ENCODE measurements at regions of chr1 and their contacts with region 1.

Region 1: GRCh38 chr1:11979851-11980675 is at the start of gene MFN2:
- DNase-seq: peak; percentile 97
- H3K4me3 ChIP-seq: peak within 1 kb of the TSS; percentile 71
- H3K4me3 Mint-ChIP-seq: peak within 1 kb of the TSS; percentile 99
- H3K27ac Mint-ChIP-seq: peak within 1 kb of the TSS; percentile 99
- H3K4me1 ChIP-seq: peaks cover 35% of the 10 kb centered on the region
- H3K4me1 Mint-ChIP-seq: peaks cover 19% of the 10 kb centered on the region
- H3K27me3 ChIP-seq: no peaks in the 10 kb centered on the region
- H3K27me3 Mint-ChIP-seq: no peaks in the 10 kb centered on the region
- CTCF ChIP-seq: no peak
- total RNA-seq, gene MFN2: 73.9 and 74.1 TPM in 2 replicates

Region 2: GRCh38 chr1:11874258-11874562 is 105.9 kb before region 1 on chr1:
- CTCF ChIA-PET with region 1: no interaction called
- POLR2A ChIA-PET with region 1: interaction called, 10 read pairs
- intact Hi-C with region 1: no loop called
- DNase-seq: no peak
- H3K4me3 ChIP-seq: no peak overlapping the region
- H3K4me3 Mint-ChIP-seq: no peak overlapping the region
- H3K27ac Mint-ChIP-seq: no peak overlapping the region
- H3K4me1 ChIP-seq: no peaks in the 10 kb centered on the region
- H3K4me1 Mint-ChIP-seq: no peaks in the 10 kb centered on the region
- H3K27me3 ChIP-seq: no peaks in the 10 kb centered on the region
- H3K27me3 Mint-ChIP-seq: no peaks in the 10 kb centered on the region
- CTCF ChIP-seq: no peak

Region 3: GRCh38 chr1:11955204-11955603 is 24.9 kb before region 1 on chr1:
- CTCF ChIA-PET with region 1: no interaction called
- POLR2A ChIA-PET with region 1: no interaction called
- intact Hi-C with region 1: no loop called
- DNase-seq: no peak
- H3K4me3 ChIP-seq: no peak overlapping the region
- H3K4me3 Mint-ChIP-seq: no peak overlapping the region
- H3K27ac Mint-ChIP-seq: no peak overlapping the region
- H3K4me1 ChIP-seq: no peaks in the 10 kb centered on the region
- H3K4me1 Mint-ChIP-seq: no peaks in the 10 kb centered on the region
- H3K27me3 ChIP-seq: no peaks in the 10 kb centered on the region
- H3K27me3 Mint-ChIP-seq: no peaks in the 10 kb centered on the region
- CTCF ChIP-seq: no peak

Region 4: DNA sequence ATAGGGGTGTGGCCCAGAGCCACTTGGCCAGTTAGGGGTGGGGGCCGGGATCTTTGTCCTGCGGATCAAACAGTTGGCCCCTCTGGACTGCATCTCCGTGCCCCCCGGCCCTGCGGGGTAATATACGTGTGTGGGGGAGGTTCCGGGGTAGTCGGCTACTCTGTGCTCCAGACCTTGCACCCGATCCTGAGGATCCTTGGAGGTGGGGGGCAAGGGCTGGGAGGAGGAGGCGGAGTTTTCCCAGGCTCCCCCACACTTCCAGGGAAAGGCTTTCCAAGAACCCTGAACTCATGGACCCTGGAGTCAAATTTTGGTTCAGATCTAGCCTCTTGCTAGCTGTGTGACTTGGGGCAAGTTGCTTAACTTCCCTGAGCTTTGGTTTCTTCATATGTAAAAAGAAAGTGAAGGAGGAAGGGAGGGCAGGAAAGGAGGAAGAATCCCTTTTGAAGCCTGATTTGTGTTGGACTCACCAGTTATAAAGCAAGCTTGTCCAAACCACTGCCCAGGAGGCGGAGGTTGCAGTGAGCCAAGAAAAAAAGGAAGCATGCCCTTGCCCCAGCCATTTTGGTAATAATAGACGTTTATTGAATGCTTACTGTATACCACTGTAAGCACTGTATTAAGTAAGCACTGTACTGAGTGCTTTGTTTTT is 39.9 kb after region 1 on chr1:
- CTCF ChIA-PET with region 1: interaction called, 3 read pairs
- POLR2A ChIA-PET with region 1: interaction called, 29 read pairs
- intact Hi-C with region 1: no loop called
- DNase-seq: no peak
- H3K4me3 ChIP-seq: peak overlapping the region; percentile 81
- H3K4me3 Mint-ChIP-seq: peak overlapping the region; percentile 74
- H3K27ac Mint-ChIP-seq: peak overlapping the region; percentile 50
- H3K4me1 ChIP-seq: no peaks in the 10 kb centered on the region
- H3K4me1 Mint-ChIP-seq: no peaks in the 10 kb centered on the region
- H3K27me3 ChIP-seq: no peaks in the 10 kb centered on the region
- H3K27me3 Mint-ChIP-seq: no peaks in the 10 kb centered on the region
- CTCF ChIP-seq: no peak

Measured in Caco-2 (cell line).